GM13976 (cell line): ENCODE measurements at regions of chr6 and their contacts with region 1.

Region 1: DNA sequence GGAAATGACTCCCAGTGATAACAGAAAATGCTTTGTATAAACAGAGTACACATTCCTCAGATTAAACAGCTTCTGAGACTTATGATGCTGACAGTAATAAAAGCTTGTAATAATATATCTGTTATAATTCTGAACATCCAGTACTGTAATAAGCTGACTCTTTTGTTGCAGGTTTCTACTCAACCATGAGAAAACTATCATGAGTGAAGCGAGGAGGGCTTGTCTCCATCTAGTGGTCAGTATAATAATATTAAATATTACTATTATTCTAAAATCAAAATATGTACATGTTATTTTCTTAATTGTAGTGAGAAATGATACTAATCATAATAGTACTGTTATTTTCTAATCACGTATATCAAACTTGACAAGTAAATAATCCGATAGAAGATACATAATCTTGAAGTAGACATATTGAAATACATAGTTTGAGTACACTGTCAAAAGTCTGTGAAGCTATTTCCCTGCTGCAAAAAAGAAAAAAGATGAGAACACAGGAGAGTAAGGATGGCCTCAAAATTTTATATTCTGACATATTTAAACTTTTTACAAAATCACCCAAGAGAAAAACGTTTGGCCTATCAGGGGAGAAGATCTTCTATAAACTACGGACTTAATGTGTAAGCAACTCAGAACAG is 183.1 kb downstream of the MOXD1 start:
- DNase-seq: peak; percentile 16
- CTCF ChIP-seq: no peak

Region 2: DNA sequence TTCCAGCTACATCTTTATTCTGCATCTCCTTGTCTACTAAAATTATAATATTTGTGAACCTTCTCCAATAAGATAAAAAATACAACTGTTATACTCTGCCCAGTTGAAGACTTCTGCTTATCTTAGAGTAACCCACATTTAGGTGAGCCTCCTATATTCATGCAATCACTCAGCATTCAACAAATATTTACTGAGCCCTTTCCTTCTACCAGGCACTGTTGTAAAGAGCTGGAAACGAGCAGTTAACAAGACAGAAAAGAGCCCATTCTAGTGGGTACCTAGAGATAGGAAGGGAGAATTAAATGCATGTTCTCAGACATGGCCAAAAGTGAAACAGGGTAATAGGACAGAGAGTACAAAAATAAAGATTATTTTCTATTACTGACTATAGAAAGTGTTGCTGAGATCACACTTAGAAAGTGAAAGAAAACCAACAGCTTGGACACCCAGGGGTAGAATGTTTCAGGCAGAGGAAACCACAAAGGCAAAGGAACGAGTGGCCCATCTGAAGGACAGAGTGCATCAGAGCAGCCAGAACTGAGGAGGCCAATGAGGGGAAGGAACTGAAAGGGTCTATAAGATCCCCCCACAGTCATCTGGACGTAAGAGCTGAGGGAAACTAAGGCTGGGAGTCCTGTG is 1441.8 kb before region 1 on chr6:
- in situ Hi-C with region 1: no loop called
- DNase-seq: peak; percentile 55
- CTCF ChIP-seq: no peak

Region 3: GRCh38 chr6:131909408-131910218 is 308.6 kb before region 1 on chr6:
- in situ Hi-C with region 1: loop called (anchors 25 kb)
- DNase-seq: peak; percentile 60
- CTCF ChIP-seq: peak; percentile 56